Psoas muscle (tissue), 8 donors: ENCODE measurements at regions of chr10 and their contacts with region 1.

Region 1: DNA sequence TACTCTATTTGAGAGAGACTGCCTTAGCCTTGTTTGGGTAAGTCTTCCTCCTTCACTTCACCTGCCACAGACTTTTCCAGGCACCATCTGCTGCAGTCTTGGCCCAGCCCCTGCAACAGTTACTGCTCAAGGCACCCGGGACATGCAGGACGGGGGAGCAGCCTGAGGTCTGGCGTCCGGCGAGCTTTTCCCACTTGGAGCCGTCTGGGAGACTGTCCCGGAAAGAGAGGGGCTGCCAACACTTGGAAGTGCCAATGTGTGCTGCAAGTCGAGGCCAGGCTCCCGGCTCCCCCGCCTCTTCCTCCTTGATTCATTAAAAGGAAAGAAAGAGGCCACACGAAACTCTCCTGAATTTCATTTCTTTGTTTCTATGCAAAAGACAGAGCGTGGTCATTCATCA is 13.7 kb downstream of the HTRA1 start:
- DNase-seq: peak; percentile 80 to 87
- ATAC-seq: peak; percentile 24 to 79 (median 74)
- H3K4me3 ChIP-seq: peak overlapping the region; percentile 41
- H3K27ac ChIP-seq: peak overlapping the region; percentile 9
- H3K4me1 ChIP-seq: peaks cover 19% of the 10 kb centered on the region
- H3K27me3 ChIP-seq: no peaks in the 10 kb centered on the region
- CTCF ChIP-seq: no peak

Region 2: DNA sequence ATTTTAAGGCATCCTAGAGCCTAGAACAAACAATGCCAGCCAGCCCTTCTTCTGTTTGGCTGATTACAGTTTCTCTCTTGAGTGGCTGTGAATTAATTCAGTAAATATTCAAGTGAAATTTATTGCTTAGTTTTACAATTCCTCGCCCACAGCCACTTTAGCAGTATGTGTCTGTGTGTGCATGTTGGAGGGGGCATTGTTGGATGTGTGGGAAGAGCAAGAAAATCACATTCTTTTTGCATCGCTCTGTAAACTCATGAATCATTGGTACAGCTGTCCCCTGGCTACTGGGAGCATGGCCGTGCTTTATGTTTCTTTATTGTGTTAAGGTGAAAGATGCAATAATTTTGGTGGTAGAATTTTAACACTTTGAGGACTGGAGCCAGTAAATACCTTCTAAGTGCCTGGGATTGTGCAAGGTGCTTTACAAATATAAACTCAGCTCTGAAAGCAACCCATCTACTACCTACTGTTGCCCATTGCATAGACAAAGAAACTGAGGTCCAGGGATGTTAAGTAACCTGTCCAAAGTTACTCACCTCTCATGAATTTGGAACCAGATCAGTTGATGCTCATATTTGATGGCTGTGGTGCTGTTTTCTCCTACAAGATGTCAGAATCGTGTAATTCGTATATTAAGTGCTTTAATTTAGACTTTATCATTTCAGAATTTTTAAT is 293.9 kb before region 1 on chr10:
- intact Hi-C with region 1: no loop called
- DNase-seq: no peak
- ATAC-seq: no peak
- H3K4me3 ChIP-seq: no peak overlapping the region
- H3K27ac ChIP-seq: peak overlapping the region; percentile 41
- H3K4me1 ChIP-seq: peaks cover 19% of the 10 kb centered on the region
- H3K27me3 ChIP-seq: no peaks in the 10 kb centered on the region
- CTCF ChIP-seq: no peak

Region 3: GRCh38 chr10:122492999-122493481 is 17.9 kb after region 1 on chr10:
- intact Hi-C with region 1: loop called in 1 of 2 experiments (anchors 2 kb)
- DNase-seq: no peak
- ATAC-seq: peak in 2 of 4 donors; percentile 25 to 30
- H3K4me3 ChIP-seq: no peak overlapping the region
- H3K27ac ChIP-seq: peak overlapping the region; percentile 14
- H3K4me1 ChIP-seq: no peaks in the 10 kb centered on the region
- H3K27me3 ChIP-seq: no peaks in the 10 kb centered on the region
- CTCF ChIP-seq: no peak

Region 4: DNA sequence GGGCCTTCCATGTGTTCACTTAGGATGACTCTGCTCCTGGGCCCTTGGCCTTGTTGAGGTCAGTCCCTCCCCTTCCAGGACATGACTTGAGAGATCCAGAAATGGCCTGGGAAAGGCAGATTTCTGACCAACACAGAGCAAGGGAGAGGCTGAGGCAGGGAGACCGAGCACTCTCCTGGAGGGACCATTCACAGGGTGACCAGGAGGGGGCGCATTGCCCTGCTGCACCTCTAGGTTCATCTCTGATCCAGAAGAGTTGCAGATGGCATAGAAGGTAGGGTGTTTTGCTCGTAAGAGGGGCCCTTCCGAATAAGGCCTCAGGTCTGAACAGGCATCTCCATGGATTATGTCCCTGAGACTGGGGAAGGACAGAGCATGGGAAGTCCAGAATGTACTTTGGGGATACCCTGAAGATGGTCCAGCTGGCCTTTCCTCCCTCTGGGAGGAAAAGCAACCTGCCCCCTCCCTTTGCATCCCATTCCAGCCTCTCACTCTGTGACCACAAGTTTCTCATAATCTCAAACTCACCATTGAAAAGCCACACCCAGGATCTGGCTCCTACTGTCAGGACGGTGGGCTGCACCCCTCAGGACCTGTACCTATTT is 92.1 kb after region 1 on chr10:
- intact Hi-C with region 1: no loop called
- DNase-seq: no peak
- ATAC-seq: peak in 3 of 4 donors; percentile 38 to 66 (median 43)
- H3K4me3 ChIP-seq: no peak overlapping the region
- H3K27ac ChIP-seq: no peak overlapping the region
- H3K4me1 ChIP-seq: no peaks in the 10 kb centered on the region
- H3K27me3 ChIP-seq: peaks cover 0 to 5% (median 1%) of the 10 kb centered on the region in 3 donors
- CTCF ChIP-seq: peak; percentile 30